Activated T-helper 1 cell treated with anti-CD3 and anti-CD28 coated beads, Interleukin-12 subunit alpha, Interleukin-12 subunit beta, Interleukin-2, Interleukin-4 antibody, amounts not matched to agents 30 ng/mL and 10 ng/mL and 1 ng/mL, durations not matched to agents 14 hours and 24 hours and 36 hours (primary cell): ENCODE measurements at regions of chr3 and their contacts with region 1.

Region 1: DNA sequence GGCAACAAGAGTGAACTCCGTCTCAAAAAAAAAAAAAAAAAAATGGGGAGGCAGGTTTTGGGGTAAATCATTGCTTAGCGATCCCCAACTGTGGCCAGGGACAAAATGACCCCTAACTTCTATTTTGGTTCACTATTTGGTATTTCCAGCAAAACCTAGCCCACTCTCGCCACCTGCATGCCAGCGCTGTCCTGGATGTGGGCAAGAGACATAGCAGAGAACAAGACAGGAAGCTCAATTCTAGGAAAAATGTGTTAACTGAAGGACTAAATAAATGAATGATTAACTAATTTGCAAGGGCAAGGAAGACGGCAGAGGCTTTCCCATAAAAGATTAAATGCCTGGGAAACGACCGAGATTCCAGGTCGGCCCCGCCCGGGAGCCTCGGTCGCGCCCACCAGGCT is 425 bp downstream of the NICN1 start:
- DNase-seq: no peak
- H3K4me3 Mint-ChIP-seq: peak overlapping the region; percentile 96
- H3K27ac Mint-ChIP-seq: peak overlapping the region; percentile 94
- H3K4me1 Mint-ChIP-seq: peaks cover 23% of the 10 kb centered on the region
- H3K27me3 Mint-ChIP-seq: no peaks in the 10 kb centered on the region

Region 2: DNA sequence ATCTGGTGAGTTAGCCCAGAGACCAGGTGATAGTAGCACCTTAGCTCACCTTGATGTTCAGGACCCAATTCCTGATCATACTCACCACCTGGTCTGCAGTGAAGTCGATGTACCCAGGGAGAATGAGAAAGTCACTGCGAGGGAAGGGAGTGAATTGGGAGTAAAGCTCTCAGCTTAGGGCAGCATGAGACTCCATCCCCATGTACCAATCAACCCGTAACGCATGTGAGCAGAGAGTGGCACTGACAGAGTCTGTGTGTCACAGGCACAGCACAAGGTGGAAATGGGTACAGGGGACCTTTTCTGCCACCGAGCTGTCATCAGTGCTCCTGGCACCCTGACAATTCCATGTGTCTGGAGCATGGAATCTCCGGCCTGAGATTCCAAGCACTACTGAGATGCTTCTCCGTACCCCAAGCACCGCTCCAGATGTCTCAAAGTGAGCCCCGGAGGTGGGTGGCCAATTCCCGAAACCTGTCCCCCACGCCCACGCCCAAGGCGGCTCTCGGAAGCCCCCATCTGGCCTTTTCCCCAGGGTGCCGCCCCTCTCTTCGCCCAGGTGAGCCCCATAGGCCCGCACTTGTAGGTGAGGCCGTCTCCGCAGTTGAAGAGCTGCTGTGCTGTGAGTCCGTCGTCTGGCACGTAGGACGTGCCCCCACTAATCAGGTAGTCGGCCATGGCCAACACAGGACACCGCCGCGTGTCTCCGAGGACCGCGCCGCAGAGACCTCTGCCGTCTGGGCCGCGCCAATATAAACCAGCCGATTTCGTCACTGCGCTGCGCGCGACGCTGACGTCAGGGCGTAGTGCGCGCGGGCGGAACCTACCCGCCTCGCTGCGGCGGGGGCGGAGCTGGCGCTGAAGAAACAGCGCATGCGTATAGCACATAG is 399.8 kb before region 1 on chr3 and contains the start of gene IMPDH2:
- intact Hi-C with region 1: loop called (anchors 1 kb)
- DNase-seq: peak; percentile 92
- H3K4me3 Mint-ChIP-seq: peak within 1 kb of the TSS; percentile 93
- H3K27ac Mint-ChIP-seq: peak within 1 kb of the TSS; percentile 90
- H3K4me1 Mint-ChIP-seq: peaks cover 50% of the 10 kb centered on the region
- H3K27me3 Mint-ChIP-seq: no peaks in the 10 kb centered on the region
- total RNA-seq, gene IMPDH2: 423 and 434 TPM in 2 replicates

Region 3: DNA sequence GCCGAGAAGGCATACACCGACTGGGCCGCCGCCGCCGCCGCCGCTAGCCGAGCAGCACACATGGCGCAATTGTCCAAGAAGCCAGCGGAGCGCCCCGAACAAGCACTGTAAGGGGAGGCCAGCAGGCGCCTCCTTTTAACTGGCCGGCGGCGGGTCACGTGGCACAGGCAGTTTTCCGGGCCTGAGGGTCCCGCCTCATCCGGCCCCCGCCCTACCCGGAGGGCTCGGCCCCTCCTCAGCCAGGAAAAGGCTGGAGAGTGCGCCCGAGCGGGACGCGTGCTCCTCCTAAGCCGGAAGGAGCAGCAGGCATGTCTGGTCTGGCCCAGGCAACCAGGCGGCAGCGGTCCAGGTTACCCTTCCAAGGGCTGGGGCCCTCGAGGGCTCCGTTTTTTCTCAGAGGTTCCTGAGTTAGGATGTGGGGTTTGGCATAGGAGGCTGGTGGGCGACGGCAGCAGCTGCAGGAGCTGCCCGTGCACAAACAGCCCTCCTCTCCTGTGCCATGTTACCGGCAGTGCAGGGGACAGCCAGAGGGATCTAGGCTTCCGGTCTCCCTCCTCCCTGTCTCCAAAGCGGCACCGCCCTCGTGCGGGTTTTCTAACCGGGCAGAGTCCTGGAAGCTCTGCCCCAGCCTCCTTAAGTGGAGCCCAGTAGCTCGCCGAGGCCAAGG is 70.3 kb before region 1 on chr3 and contains the start of gene GPX1:
- intact Hi-C with region 1: loop called (anchors 1 kb)
- DNase-seq: peak; percentile 83
- H3K4me3 Mint-ChIP-seq: peak within 1 kb of the TSS; percentile 94
- H3K27ac Mint-ChIP-seq: peak within 1 kb of the TSS; percentile 90
- H3K4me1 Mint-ChIP-seq: peaks cover 27% of the 10 kb centered on the region
- H3K27me3 Mint-ChIP-seq: no peaks in the 10 kb centered on the region
- total RNA-seq, gene GPX1: 181 and 188 TPM in 2 replicates

Region 4: DNA sequence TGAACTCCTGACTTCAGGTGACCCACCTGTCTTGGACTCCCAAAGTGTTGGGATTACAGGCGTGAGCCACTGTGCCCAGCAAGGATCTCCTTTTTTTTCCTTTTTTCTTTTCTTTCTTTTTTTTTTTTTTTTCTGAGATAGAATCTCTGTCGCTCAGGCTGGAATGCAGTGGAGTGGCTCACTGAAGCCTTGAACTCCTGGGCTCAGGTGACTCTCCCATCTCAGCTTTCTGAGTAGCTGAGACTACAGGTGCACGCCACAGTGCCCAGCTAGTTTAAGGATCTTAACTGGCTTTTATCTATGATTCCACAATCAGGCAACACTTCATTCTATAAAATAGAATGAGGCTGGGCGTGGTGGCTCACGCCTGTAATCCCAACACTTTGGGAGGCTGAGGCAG is 16.7 kb after region 1 on chr3:
- intact Hi-C with region 1: loop called (anchors 1 kb)
- DNase-seq: no peak
- H3K4me3 Mint-ChIP-seq: no peak overlapping the region
- H3K27ac Mint-ChIP-seq: no peak overlapping the region
- H3K4me1 Mint-ChIP-seq: peaks cover 12% of the 10 kb centered on the region
- H3K27me3 Mint-ChIP-seq: no peaks in the 10 kb centered on the region

Region 5: GRCh38 chr3:49469936-49470713 is 41.4 kb after region 1 on chr3 and contains the start of gene DAG1:
- intact Hi-C with region 1: loop called (anchors 1 kb)
- DNase-seq: peak; percentile 96
- H3K4me3 Mint-ChIP-seq: peak within 1 kb of the TSS; percentile 92
- H3K27ac Mint-ChIP-seq: peak within 1 kb of the TSS; percentile 88
- H3K4me1 Mint-ChIP-seq: peaks cover 23% of the 10 kb centered on the region
- H3K27me3 Mint-ChIP-seq: no peaks in the 10 kb centered on the region
- total RNA-seq, gene DAG1: 20.5 and 23.7 TPM in 2 replicates